ENCODE measurements at regions of chr15 and their contacts with region 1.

Region 1: DNA sequence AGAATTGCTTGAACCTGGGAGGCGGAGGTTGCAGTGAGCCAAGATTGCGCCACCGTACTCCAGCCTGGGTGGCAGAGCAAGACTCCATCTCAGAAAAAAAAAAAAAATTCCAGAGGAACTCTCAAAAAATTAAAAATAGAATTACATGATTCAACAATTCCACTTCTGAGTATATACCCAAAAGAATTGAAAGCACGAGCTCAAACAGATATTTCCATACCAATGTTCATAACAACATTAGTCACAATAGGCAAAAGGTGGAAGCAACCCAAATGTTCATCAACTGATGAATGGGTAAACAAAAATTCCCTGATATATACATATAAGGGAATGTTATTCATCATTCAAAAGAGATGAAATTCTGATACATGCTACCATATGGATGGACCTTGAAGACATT is 16.9 kb upstream of the MORF4L1 start:
- DNase-seq: no peak
- ATAC-seq: no peak
- H3K4me3 ChIP-seq: no peak overlapping the region
- H3K27ac ChIP-seq: no peak overlapping the region
- H3K4me1 ChIP-seq: peaks cover 4% of the 10 kb centered on the region
- H3K27me3 ChIP-seq: no peaks in the 10 kb centered on the region
- CTCF ChIP-seq: no peak

Region 2: DNA sequence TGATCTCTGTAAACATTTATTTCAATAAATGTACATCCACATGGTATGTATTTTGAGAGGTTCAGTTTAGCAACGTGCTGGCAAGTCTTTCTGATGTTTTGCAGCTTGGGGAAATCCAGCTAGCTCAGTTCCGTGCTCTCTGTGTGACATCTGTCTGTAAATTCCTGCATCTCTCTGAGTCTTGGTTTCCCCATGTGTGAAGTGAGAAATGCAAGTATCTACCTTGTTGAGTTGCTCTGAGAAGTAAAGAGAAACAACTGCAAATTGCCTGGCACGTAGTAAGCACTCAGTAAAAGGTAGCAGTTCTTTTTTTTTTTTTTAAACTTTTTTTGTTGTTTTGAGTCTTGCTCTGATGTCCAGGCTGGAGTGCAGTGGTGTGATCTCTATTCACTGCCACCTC is 13.2 kb before region 1 on chr15:
- intact Hi-C with region 1: loop called in 1 of 2 experiments (anchors 2 kb)
- DNase-seq: no peak
- ATAC-seq: no peak
- H3K4me3 ChIP-seq: no peak overlapping the region
- H3K27ac ChIP-seq: no peak overlapping the region
- H3K4me1 ChIP-seq: no peaks in the 10 kb centered on the region
- H3K27me3 ChIP-seq: no peaks in the 10 kb centered on the region
- CTCF ChIP-seq: no peak